Psoas muscle (tissue), 8 donors: ENCODE measurements at regions of chr18 and their contacts with region 1.

Region 1: DNA sequence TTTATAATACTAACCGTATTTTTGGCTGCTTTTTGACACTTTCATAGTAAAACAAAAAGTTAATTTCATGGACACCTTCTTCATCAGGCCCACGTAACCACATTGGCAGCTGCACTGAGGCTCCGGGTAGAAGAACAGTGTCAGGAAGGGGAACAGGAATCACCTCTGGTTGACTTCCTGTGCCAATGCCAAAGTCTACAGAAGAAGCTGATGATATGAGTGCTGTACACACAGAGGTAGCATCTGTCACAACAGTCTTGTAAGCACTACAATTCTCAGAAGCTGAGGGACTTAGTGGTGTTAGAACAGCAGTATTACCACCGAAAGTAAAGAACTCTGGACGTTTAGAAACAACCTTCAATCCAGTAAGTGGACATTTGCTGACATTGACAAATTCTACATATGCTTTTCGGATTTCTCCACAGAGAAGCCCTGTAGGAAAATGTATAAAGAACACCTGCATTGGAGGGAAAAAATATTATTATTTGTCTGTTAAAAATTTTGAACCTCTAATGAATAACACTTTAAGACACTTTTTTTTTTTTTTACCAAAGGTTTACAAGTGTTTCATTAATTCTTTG is 85.3 kb downstream of the TRAPPC8 start:
- DNase-seq: no peak
- ATAC-seq: no peak
- H3K4me3 ChIP-seq: no peak overlapping the region
- H3K27ac ChIP-seq: no peak overlapping the region
- H3K4me1 ChIP-seq: no peaks in the 10 kb centered on the region
- H3K27me3 ChIP-seq: no peaks in the 10 kb centered on the region
- CTCF ChIP-seq: no peak

Region 2: DNA sequence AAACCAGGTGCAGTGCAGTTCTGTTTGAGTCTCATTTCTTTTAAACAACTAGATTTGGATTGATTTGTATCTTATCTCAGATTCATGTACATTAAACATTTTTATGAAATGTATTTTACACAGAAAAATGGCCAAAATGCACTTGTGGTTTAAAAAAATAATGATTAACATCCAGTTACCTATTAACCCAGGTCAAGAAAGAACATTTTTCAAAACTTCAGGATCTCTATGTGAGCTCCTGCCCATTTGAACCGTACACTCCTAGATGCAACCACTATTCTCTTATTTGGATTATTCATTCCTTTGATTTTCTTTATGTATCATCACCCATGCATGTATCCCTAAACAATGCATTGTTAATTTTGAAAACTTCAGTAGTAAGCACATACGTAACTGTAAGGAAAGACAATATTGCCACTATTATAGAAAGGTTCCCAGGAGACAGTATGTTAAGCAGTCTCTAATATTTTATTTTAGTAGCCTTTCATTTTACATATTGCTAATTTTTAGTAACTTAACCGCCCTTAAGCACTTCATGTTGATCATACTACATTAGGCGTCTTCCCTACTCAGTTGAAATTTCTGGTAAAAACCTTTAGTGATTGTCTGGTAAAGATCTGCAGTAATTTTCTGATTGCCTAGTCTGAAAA is 256.8 kb after region 1 on chr18:
- intact Hi-C with region 1: loop called in 1 of 2 experiments (anchors 10 kb)
- DNase-seq: no peak
- ATAC-seq: no peak
- H3K4me3 ChIP-seq: no peak overlapping the region
- H3K27ac ChIP-seq: no peak overlapping the region
- H3K4me1 ChIP-seq: no peaks in the 10 kb centered on the region
- H3K27me3 ChIP-seq: no peaks in the 10 kb centered on the region
- CTCF ChIP-seq: no peak